Activated naive CD8-positive, alpha-beta T cell treated with anti-CD3 and anti-CD28 coated beads, Interleukin-2, amount 10 ng/mL, durations not matched to agents 7 days and 5 days (primary cell): ENCODE measurements at regions of chr11 and their contacts with region 1.

Region 1: GRCh38 chr11:64304316-64305072 is 830 bp upstream of the ESRRA start:
- DNase-seq: peak; percentile 97
- ATAC-seq: peak; percentile 46
- H3K4me3 Mint-ChIP-seq: peak overlapping the region; percentile 87
- H3K27ac Mint-ChIP-seq: peak overlapping the region; percentile 98
- H3K4me1 Mint-ChIP-seq: peaks cover 25% of the 10 kb centered on the region
- H3K27me3 Mint-ChIP-seq: peaks cover 25% of the 10 kb centered on the region

Region 2: GRCh38 chr11:64204464-64204989 is 100.0 kb before region 1 on chr11:
- POLR2A ChIA-PET with region 1: interaction called, 76 read pairs
- DNase-seq: peak; percentile 76
- ATAC-seq: peak; percentile 39
- H3K4me3 Mint-ChIP-seq: peak overlapping the region; percentile 67
- H3K27ac Mint-ChIP-seq: peak overlapping the region; percentile 87
- H3K4me1 Mint-ChIP-seq: peaks cover 34% of the 10 kb centered on the region
- H3K27me3 Mint-ChIP-seq: no peaks in the 10 kb centered on the region

Region 3: GRCh38 chr11:64246871-64247728 is 57.4 kb before region 1 on chr11 and contains the start of gene PPP1R14B:
- POLR2A ChIA-PET with region 1: interaction called, 16 read pairs
- DNase-seq: peak; percentile 88
- ATAC-seq: peak; percentile 51
- H3K4me3 Mint-ChIP-seq: peak within 1 kb of the TSS; percentile 93
- H3K27ac Mint-ChIP-seq: peak within 1 kb of the TSS; percentile 90
- H3K4me1 Mint-ChIP-seq: peaks cover 23% of the 10 kb centered on the region
- H3K27me3 Mint-ChIP-seq: peaks cover 2% of the 10 kb centered on the region
- total RNA-seq, gene PPP1R14B: 122 to 124 TPM

Region 4: GRCh38 chr11:64284048-64284961 is 20.2 kb before region 1 on chr11 and contains the start of gene BAD:
- POLR2A ChIA-PET with region 1: interaction called, 23 read pairs
- DNase-seq: peak; percentile 89
- ATAC-seq: peak; percentile 84
- H3K4me3 Mint-ChIP-seq: peak within 1 kb of the TSS; percentile 85
- H3K27ac Mint-ChIP-seq: peak within 1 kb of the TSS; percentile 86
- H3K4me1 Mint-ChIP-seq: peaks cover 8% of the 10 kb centered on the region
- H3K27me3 Mint-ChIP-seq: no peaks in the 10 kb centered on the region
- total RNA-seq, gene BAD: 32.9 to 35.8 TPM

Region 5: GRCh38 chr11:64341851-64342791 is 37.6 kb after region 1 on chr11:
- POLR2A ChIA-PET with region 1: interaction called, 11 read pairs
- DNase-seq: peak; percentile 97
- ATAC-seq: peak; percentile 67
- H3K4me3 Mint-ChIP-seq: peak overlapping the region; percentile 94
- H3K27ac Mint-ChIP-seq: peak overlapping the region; percentile 61
- H3K4me1 Mint-ChIP-seq: peaks cover 41% of the 10 kb centered on the region
- H3K27me3 Mint-ChIP-seq: no peaks in the 10 kb centered on the region

Region 6: DNA sequence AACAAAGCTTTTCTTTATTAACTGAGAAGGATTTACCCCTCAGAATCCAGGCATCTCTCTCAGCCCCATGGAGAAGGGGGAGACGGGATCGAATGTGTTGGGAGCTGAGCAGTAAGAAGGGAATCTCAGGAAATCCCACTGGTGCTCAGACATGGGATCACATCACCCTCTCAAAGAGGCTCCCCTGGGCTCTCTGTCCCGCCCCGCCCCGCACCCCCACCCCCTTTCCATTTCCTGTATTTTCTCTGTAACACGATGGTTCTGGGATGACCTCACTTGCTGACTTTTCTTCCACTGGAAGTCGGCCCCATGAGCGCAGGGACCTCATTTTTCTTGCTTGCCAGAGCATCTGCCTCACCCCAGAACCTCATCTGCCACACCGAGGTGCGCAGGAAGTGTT is 154.5 kb after region 1 on chr11:
- POLR2A ChIA-PET with region 1: no interaction called
- DNase-seq: peak; percentile 12
- ATAC-seq: no peak
- H3K4me3 Mint-ChIP-seq: no peak overlapping the region
- H3K27ac Mint-ChIP-seq: no peak overlapping the region
- H3K4me1 Mint-ChIP-seq: no peaks in the 10 kb centered on the region
- H3K27me3 Mint-ChIP-seq: peaks cover 6% of the 10 kb centered on the region